ENCODE measurements at regions of chr19 and their contacts with region 1.

Region 1: DNA sequence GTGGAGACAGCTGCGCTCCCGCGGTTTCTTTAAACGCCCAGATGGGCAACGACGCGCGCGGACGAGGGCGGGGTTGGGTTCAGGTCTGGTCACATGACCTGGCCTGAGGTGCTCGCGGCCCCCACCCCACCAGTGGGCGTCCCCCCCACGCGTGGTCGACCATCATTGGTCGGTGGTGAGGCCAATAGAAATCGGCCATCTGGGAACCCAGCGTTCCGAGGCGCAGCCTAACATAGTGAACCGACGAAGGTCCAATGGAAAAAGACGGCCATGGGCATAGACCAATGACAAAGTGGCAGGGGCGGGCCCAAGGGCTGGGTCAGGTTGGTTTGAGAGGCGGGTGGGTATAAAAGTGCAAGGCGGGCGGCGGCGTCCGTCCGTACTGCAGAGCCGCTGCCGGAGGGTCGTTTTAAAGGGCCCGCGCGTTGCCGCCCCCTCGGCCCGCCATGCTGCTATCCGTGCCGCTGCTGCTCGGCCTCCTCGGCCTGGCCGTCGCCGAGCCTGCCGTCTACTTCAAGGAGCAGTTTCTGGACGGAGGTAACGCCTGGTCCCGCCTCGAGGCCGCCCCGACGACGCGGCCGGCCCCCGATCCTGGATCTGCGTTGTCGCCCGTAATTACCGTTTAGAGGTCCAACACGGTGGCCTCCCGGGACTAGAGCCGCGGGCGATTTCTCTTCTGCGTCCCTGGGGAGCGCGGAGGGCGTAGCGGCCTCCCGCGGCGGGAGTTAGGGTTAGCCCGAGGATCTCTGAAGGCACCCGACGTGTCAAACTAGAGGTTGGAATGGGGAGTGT is at the start of gene CALR:
- DNase-seq: peak; percentile 97 to 100 (median 99)
- ATAC-seq: peak; percentile 88
- H3K4me3 ChIP-seq: peak within 1 kb of the TSS; percentile 94
- H3K4me3 Mint-ChIP-seq: peak within 1 kb of the TSS; percentile 94
- H3K27ac ChIP-seq: peak within 1 kb of the TSS; percentile 74 to 80
- H3K27ac Mint-ChIP-seq: peak within 1 kb of the TSS; percentile 93
- H3K4me1 ChIP-seq: peaks cover 65% of the 10 kb centered on the region
- H3K4me1 Mint-ChIP-seq: peaks cover 54% of the 10 kb centered on the region
- H3K27me3 ChIP-seq: peaks cover 0 to under 1% of the 10 kb centered on the region in 2 experiments
- H3K27me3 Mint-ChIP-seq: no peaks in the 10 kb centered on the region
- CTCF ChIP-seq: no peak
- total RNA-seq, gene CALR: 558 to 559 TPM

Region 2: GRCh38 chr19:12736995-12737834 is 201.2 kb before region 1 on chr19 and contains the start of gene GET3:
- CTCF ChIA-PET with region 1: no interaction called
- POLR2A ChIA-PET with region 1: no interaction called
- intact Hi-C with region 1: loop called in 1 of 2 experiments (anchors 10 kb)
- DNase-seq: peak; percentile 66 to 92 (median 74)
- ATAC-seq: peak; percentile 82
- H3K4me3 ChIP-seq: peak within 1 kb of the TSS; percentile 79
- H3K4me3 Mint-ChIP-seq: peak within 1 kb of the TSS; percentile 96
- H3K27ac ChIP-seq: peak within 1 kb of the TSS; percentile 76
- H3K27ac Mint-ChIP-seq: peak within 1 kb of the TSS; percentile 86
- H3K4me1 ChIP-seq: peaks cover 52% of the 10 kb centered on the region
- H3K4me1 Mint-ChIP-seq: peaks cover 38% of the 10 kb centered on the region
- H3K27me3 ChIP-seq: no peaks in the 10 kb centered on the region
- H3K27me3 Mint-ChIP-seq: no peaks in the 10 kb centered on the region
- CTCF ChIP-seq: no peak
- total RNA-seq, gene GET3: 13.9 to 14.5 TPM

Region 3: DNA sequence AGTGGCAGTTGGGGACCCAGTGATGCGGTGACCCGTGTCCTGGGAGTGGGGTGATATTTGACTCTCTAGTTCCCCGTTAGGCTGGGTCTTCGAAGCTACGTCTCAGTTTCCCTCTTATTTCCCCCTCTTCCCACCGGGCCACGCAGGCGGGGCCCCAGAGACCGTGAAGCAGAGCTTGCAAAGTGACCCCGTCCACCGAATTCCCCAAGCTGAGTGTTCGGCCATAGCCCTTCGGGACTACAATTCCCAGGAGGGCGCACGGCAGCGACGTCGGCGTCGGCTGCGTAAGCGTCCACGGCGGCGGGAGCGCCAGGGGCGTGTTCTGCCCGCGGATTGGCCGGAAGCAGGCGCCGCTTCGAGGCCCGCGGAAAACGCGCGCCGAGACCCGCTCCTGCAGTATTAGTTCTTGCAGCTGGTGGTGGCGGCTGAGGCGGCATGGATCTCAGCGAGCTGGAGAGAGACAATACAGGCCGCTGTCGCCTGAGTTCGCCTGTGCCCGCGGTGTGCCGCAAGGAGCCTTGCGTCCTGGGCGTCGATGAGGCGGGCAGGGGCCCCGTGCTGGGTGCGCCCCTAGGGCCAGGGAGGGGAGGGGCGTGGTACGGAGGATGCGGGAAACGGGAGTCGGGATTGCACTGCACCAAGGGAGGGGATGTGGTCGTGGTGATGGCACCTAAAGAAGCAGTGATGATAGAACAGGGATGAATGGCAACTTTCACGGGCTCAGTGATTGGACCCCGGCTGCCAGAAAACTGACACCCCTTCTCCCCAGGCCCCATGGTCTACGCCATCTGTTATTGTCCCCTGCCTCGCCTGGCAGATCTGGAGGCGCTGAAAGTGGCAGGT is 132.0 kb before region 1 on chr19 and contains the start of gene RNASEH2A:
- CTCF ChIA-PET with region 1: no interaction called
- POLR2A ChIA-PET with region 1: no interaction called
- intact Hi-C with region 1: loop called in 1 of 2 experiments (anchors 10 kb)
- DNase-seq: peak; percentile 73 to 94 (median 84)
- ATAC-seq: peak; percentile 91
- H3K4me3 ChIP-seq: peak within 1 kb of the TSS; percentile 64
- H3K4me3 Mint-ChIP-seq: peak within 1 kb of the TSS; percentile 96
- H3K27ac ChIP-seq: peak within 1 kb of the TSS in 1 of 2 donors; percentile 23
- H3K27ac Mint-ChIP-seq: peak within 1 kb of the TSS; percentile 88
- H3K4me1 ChIP-seq: peaks cover 26% of the 10 kb centered on the region
- H3K4me1 Mint-ChIP-seq: peaks cover 21% of the 10 kb centered on the region
- H3K27me3 ChIP-seq: no peaks in the 10 kb centered on the region
- H3K27me3 Mint-ChIP-seq: no peaks in the 10 kb centered on the region
- CTCF ChIP-seq: no peak
- total RNA-seq, gene RNASEH2A: 1.5 to 2.7 TPM

Region 4: DNA sequence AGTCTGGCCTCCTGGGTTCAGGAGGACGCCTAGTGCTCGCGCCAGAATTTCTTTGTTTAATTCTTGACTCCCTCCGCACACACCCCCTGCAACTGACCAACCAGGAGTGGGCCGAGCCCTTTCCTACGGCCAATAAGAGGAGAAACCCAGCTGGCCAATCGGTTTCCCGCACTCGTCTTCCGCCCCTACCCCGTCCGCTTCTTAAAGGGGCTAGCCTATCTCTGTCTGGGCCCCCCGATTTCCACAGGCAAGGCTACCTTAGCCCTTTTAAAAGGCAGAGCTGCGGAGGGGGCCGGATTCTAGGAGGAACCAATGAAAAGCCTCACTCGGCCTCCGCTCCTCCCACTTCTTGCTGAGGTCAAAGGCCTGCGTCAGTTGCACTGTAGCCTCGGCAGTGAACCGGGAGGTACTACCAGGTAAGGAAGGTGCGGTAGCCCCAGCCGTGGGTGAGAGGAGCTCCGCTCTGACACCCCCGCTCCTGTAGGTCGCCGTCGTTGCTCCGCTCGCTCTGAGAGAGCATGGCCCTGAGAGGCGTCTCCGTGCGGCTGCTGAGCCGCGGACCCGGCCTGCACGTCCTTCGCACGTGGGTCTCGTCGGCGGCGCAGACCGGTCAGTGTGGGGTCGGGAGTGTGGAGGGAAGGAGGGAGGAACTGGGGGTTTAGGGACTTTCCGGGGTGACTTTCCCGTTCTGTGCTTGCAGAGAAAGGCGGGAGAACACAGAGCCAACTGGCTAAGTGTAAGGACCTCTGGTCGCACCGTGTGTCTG is 47.5 kb before region 1 on chr19 and contains the start of gene GCDH:
- CTCF ChIA-PET with region 1: no interaction called
- POLR2A ChIA-PET with region 1: interaction called, 26 read pairs
- intact Hi-C with region 1: loop called (anchors 1 to 2 kb)
- DNase-seq: peak; percentile 90 to 99 (median 94)
- ATAC-seq: peak; percentile 89
- H3K4me3 ChIP-seq: peak within 1 kb of the TSS; percentile 89
- H3K4me3 Mint-ChIP-seq: peak within 1 kb of the TSS; percentile 96
- H3K27ac ChIP-seq: peak within 1 kb of the TSS; percentile 67 to 68
- H3K27ac Mint-ChIP-seq: peak within 1 kb of the TSS; percentile 90
- H3K4me1 ChIP-seq: peaks cover 25% of the 10 kb centered on the region
- H3K4me1 Mint-ChIP-seq: peaks cover 31% of the 10 kb centered on the region
- H3K27me3 ChIP-seq: no peaks in the 10 kb centered on the region
- H3K27me3 Mint-ChIP-seq: no peaks in the 10 kb centered on the region
- CTCF ChIP-seq: no peak
- total RNA-seq, gene GCDH: 39.2 to 42.1 TPM

Region 5: DNA sequence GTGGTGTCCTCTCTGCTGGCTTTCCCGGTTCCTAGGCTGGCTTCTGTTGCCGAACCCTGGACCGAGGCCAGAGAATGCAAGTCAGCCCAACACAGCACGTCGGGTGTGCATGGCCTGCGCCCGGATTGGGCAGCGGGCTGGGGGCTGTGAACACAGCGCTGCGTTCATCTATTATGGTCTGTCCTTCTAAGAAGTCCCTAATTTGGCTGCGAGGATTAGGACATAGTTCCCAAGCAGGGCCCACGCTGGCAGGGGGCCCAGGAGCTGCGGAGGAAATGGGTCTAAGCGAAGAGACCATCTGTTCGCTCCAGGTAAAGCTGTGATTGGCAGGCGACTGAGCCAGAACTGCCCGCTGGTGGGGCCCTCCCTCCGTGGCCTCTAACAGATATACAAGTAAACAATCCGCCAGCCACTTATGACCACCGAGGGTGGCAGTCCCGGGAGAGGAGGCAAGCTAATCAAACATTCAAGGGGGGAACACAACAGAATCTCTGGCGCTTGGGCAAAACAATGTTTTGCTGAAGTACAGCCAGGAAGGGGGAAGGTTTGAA is 25.3 kb before region 1 on chr19:
- CTCF ChIA-PET with region 1: no interaction called
- POLR2A ChIA-PET with region 1: interaction called, 24 read pairs
- intact Hi-C with region 1: no loop called
- DNase-seq: no peak
- ATAC-seq: no peak
- H3K4me3 ChIP-seq: no peak overlapping the region
- H3K4me3 Mint-ChIP-seq: no peak overlapping the region
- H3K27ac ChIP-seq: no peak overlapping the region
- H3K27ac Mint-ChIP-seq: peak overlapping the region; percentile 91
- H3K4me1 ChIP-seq: peaks cover 23% of the 10 kb centered on the region
- H3K4me1 Mint-ChIP-seq: peaks cover 27% of the 10 kb centered on the region
- H3K27me3 ChIP-seq: no peaks in the 10 kb centered on the region
- H3K27me3 Mint-ChIP-seq: no peaks in the 10 kb centered on the region
- CTCF ChIP-seq: no peak

Region 6: DNA sequence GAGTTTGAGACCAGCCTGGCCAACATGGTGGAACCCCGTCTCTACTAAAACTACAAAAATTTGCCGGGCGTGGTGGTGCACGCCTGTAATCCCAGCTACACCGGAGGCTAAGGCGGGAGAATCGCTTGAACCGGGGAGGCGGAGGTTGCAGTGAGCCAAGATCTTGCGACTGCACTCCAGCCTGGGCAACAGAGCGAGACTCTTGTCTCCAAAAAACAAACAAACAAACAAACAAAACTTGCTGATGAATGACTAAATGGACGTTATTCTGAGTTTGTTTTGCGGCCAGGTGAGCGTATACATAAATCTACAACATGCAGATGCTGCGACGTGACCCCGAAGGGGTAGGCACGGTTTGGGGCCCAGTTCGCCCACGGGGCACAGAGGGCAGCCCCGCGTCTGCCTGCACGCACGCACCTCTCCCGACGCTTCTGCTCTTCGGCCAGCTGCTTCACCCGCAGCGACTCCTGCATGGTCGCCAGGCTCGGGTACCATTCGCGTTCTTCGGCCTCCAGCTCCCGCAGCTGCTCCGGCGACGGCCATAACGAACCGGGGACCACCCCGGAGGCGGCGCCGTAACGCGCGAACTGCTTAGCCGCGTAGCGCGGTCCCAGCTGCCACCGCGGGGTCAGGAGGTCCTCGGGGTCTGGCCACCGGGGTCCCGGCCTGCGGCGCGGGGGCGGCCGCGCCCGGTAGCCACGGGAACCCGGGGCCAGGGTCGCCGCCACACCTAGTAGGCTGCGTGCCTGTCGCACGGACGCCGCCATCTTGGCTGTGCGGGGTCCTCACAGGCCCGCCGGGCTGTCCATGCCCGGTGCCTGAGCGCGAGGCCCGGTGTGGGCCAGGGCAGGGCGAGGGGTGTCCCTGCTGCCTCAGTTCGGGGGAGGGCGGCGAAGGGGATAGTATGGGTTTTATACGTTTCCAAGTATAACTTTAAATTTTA is 18.3 kb after region 1 on chr19 and contains the start of gene GADD45GIP1:
- CTCF ChIA-PET with region 1: no interaction called
- POLR2A ChIA-PET with region 1: interaction called, 11 read pairs
- intact Hi-C with region 1: no loop called
- DNase-seq: peak; percentile 65 to 89 (median 78)
- ATAC-seq: peak; percentile 96
- H3K4me3 ChIP-seq: peak within 1 kb of the TSS; percentile 91
- H3K4me3 Mint-ChIP-seq: peak within 1 kb of the TSS; percentile 90
- H3K27ac ChIP-seq: peak within 1 kb of the TSS; percentile 62 to 82
- H3K27ac Mint-ChIP-seq: peak within 1 kb of the TSS; percentile 88
- H3K4me1 ChIP-seq: peaks cover 38% of the 10 kb centered on the region
- H3K4me1 Mint-ChIP-seq: peaks cover 19% of the 10 kb centered on the region
- H3K27me3 ChIP-seq: no peaks in the 10 kb centered on the region
- H3K27me3 Mint-ChIP-seq: no peaks in the 10 kb centered on the region
- CTCF ChIP-seq: no peak
- total RNA-seq, gene GADD45GIP1: 12.1 to 12.8 TPM

Measured in CD4-positive, alpha-beta T cell (primary cell).